H1 (cell line): ENCODE measurements at regions of chr2 and their contacts with region 1.

Region 1: DNA sequence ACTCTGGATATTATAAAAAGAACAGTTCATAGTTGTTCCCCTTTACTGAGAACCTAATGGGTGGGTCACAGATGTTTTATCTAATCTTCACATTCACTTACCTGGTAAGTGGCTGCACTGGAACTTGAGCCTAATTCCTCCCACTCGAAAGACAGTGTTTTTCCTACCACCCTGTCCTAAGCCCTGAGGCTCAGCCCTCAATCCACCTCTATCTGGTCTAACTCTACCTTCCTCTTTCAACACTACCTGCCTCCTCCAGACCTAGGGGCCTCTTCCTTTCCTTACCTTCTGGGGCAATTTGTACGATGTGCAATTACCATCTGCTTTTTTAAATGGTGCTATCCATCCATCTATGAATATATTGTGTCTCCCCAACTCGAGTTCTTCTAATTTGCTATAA is 9.7 kb upstream of the KIF3C start:
- DNase-seq: no peak
- H3K4me3 ChIP-seq: no peak overlapping the region
- H3K27ac ChIP-seq: no peak overlapping the region
- H3K4me1 ChIP-seq: no peaks in the 10 kb centered on the region
- H3K27me3 ChIP-seq: no peaks in the 10 kb centered on the region
- CTCF ChIP-seq: no peak
- EP300 ChIP-seq: no peak
- POLR2A ChIP-seq: no peak
- RAD21 ChIP-seq: no peak

Region 2: GRCh38 chr2:25161055-25161781 is 830.7 kb before region 1 on chr2:
- CTCF ChIA-PET with region 1: no interaction called
- POLR2A ChIA-PET with region 1: no interaction called
- DNase-seq: peak in 1 of 2 experiments; percentile 73
- H3K4me3 ChIP-seq: no peak overlapping the region
- H3K27ac ChIP-seq: no peak overlapping the region
- H3K4me1 ChIP-seq: peaks cover 0 to 11% (median 0%) of the 10 kb centered on the region in 4 experiments; a peak in 3 of 7 replicates
- H3K27me3 ChIP-seq: peaks cover 0 to 3% (median 2%) of the 10 kb centered on the region in 4 experiments; a peak in 4 of 7 replicates
- CTCF ChIP-seq: peak; percentile 6 to 24 (median 24); a peak in 3 of 4 replicates
- EP300 ChIP-seq: no peak
- POLR2A ChIP-seq: no peak
- RAD21 ChIP-seq: peak; percentile 4 to 22; a peak in 2 of 4 replicates

Region 3: GRCh38 chr2:25673300-25674076 is 318.5 kb before region 1 on chr2 and contains the start of gene DTNB:
- CTCF ChIA-PET with region 1: no interaction called
- POLR2A ChIA-PET with region 1: no interaction called
- DNase-seq: peak in 1 of 2 experiments; percentile 91
- H3K4me3 ChIP-seq: peak within 1 kb of the TSS; percentile 62 to 92 (median 76)
- H3K27ac ChIP-seq: peak within 1 kb of the TSS; percentile 84
- H3K4me1 ChIP-seq: peaks cover 11 to 22% (median 15%) of the 10 kb centered on the region in 4 experiments; a peak in 6 of 7 replicates
- H3K27me3 ChIP-seq: peaks cover 0 to 17% (median 9%) of the 10 kb centered on the region in 4 experiments; a peak in 5 of 7 replicates
- CTCF ChIP-seq: no peak
- EP300 ChIP-seq: no peak
- POLR2A ChIP-seq: peak in 1 of 2 experiments; percentile 10; a peak in 1 of 3 replicates
- RAD21 ChIP-seq: no peak
- total RNA-seq, gene DTNB: 40.5 and 49.5 TPM in 2 replicates

Region 4: GRCh38 chr2:26002632-26003310 is 10.8 kb after region 1 on chr2:
- CTCF ChIA-PET with region 1: interaction called, 17 read pairs
- POLR2A ChIA-PET with region 1: no interaction called
- DNase-seq: no peak
- H3K4me3 ChIP-seq: no peak overlapping the region
- H3K27ac ChIP-seq: no peak overlapping the region
- H3K4me1 ChIP-seq: no peaks in the 10 kb centered on the region
- H3K27me3 ChIP-seq: no peaks in the 10 kb centered on the region
- CTCF ChIP-seq: no peak
- EP300 ChIP-seq: no peak
- POLR2A ChIP-seq: no peak
- RAD21 ChIP-seq: no peak

Region 5: DNA sequence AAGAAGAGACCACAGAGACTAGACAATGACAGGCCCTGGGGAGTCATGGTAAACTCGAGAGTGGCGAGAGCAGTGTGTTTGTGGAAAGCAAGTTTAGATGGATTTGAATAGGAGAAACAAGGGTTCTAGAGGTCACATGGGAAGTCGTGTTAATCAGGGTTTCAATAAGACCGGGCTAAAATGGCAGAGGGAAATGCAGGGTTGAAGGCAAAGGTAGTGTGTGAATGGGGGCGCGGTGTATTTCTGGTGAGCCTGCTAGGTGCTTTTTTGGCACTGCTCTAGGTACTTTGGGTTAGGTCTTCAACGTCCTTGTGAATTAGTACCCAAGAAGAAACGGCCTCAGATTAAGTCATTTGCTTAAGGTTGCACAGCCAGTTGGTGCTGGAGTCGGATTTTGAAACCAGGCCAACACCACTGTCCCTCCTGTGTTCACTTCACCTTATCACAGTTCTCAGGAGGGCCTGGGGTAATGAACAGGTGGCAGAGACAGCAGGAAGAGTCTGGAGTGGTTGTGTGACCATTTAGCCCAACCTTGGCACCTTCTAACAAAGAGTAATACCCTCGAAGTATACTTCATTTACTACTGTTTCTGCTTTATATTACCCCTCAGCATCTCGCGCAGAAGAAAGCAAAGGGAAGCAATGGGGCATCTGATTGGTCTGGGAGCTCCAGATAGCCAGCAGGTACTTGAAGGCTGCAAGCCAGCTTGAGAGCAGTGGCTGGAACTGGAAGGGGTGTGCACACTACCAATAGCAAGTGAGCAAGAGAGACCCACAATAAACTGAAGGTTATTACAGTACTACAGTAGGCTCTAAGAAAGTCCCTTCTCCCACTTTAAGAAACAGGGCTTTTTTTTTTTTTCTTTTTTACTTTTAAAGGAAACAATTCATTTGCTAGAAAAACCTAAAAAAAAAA is 147.6 kb after region 1 on chr2:
- CTCF ChIA-PET with region 1: interaction called, 81 read pairs
- POLR2A ChIA-PET with region 1: no interaction called
- DNase-seq: no peak
- H3K4me3 ChIP-seq: no peak overlapping the region
- H3K27ac ChIP-seq: no peak overlapping the region
- H3K4me1 ChIP-seq: peaks cover 0 to 4% (median 2%) of the 10 kb centered on the region in 4 experiments; a peak in 1 of 7 replicates
- H3K27me3 ChIP-seq: no peaks in the 10 kb centered on the region
- CTCF ChIP-seq: no peak
- EP300 ChIP-seq: no peak
- POLR2A ChIP-seq: 0 out of 3 replicates have a peak, but pooled peaks of 1 of the 2 experiments have one; percentile 33
- RAD21 ChIP-seq: no peak